Vagina (tissue), 2 donors: ENCODE measurements at regions of chr12 and their contacts with region 1.

Region 1: GRCh38 chr12:17841496-17841895 is 248.5 kb downstream of the RERGL start:
- DNase-seq: no peak
- H3K4me3 ChIP-seq: no peak overlapping the region
- H3K27ac ChIP-seq: no peak overlapping the region
- H3K4me1 ChIP-seq: no peaks in the 10 kb centered on the region
- H3K27me3 ChIP-seq: no peaks in the 10 kb centered on the region
- CTCF ChIP-seq: no peak
- POLR2A ChIP-seq: no peak

Region 2: DNA sequence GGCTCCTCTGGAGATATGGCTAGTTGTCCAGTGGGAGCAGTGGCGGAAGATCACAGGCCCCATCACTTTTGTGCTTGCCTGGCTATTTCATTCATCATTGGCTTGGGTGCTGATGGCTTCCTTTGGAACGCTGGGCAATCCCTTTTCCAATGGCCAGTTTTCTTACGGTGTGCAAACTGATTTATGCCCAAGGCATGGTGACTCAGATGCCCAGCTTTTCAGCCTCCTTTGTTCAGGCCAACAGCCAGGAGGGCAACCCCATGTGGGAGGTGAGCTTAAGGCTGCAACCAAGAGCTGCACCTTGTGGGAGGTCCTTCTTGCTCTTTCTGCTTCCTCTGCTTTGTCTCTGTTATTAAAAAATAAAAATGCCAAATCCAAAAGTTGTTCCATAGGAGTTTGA is 302.3 kb before region 1 on chr12:
- intact Hi-C with region 1: no loop called
- DNase-seq: no peak
- H3K4me3 ChIP-seq: no peak overlapping the region
- H3K27ac ChIP-seq: no peak overlapping the region
- H3K4me1 ChIP-seq: no peaks in the 10 kb centered on the region
- H3K27me3 ChIP-seq: no peaks in the 10 kb centered on the region
- CTCF ChIP-seq: no peak
- POLR2A ChIP-seq: no peak

Region 3: DNA sequence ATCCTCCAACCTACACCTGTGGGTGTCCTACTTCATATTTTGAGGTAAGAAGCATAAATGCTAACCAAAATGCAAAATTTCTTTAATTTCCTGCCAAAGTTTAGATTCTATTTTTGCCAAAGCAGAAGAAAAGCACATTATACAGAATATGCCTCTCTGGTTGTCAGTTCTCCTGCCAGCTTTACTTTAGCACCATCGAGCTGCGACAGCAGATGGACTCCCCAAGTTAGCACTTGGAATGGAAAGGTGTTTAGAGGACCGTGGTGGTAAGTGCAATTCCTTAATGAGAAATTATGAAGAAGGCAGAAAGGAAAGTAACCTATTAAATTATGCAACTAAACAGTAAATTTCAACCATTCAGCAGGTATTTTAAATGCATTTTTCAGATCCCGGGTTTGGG is 78.1 kb before region 1 on chr12:
- intact Hi-C with region 1: loop called (anchors 10 kb)
- DNase-seq: no peak
- H3K4me3 ChIP-seq: no peak overlapping the region
- H3K27ac ChIP-seq: no peak overlapping the region
- H3K4me1 ChIP-seq: no peaks in the 10 kb centered on the region
- H3K27me3 ChIP-seq: no peaks in the 10 kb centered on the region
- CTCF ChIP-seq: no peak
- POLR2A ChIP-seq: no peak